ENCODE measurements at regions of chr14 and their contacts with region 1.

Region 1: DNA sequence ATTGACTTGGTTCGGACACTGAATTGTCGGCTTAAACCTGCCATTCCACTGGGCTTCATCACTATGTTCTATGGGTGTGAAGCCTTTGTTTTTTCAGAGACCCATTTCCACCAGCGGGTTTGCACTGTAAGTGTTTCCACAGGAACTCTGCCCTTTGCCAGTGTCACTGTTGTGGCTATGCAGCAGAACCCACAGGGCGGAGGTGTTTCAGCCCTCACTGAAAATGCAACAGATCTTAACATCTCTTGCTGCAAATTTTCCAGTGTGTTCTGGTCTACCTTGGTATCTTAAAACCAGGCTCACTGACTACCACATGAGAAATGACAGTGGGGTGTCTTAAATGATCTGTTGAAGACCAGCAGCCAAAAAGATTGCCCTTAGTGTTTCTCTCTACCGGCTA is 21.1 kb downstream of the PRKCH start:
- DNase-seq: peak; percentile 87 to 95 (median 88)
- H3K4me3 ChIP-seq: peak overlapping the region; percentile 25 to 42
- H3K4me3 Mint-ChIP-seq: peak overlapping the region; percentile 72 to 92 (median 82)
- H3K27ac ChIP-seq: peak overlapping the region; percentile 78
- H3K27ac Mint-ChIP-seq: peak overlapping the region; percentile 93 to 98 (median 98)
- H3K4me1 ChIP-seq: peaks cover 97% of the 10 kb centered on the region
- H3K4me1 Mint-ChIP-seq: peaks cover 82 to 95% (median 88%) of the 10 kb centered on the region in 4 donors
- H3K27me3 ChIP-seq: no peaks in the 10 kb centered on the region
- H3K27me3 Mint-ChIP-seq: no peaks in the 10 kb centered on the region

Region 2: DNA sequence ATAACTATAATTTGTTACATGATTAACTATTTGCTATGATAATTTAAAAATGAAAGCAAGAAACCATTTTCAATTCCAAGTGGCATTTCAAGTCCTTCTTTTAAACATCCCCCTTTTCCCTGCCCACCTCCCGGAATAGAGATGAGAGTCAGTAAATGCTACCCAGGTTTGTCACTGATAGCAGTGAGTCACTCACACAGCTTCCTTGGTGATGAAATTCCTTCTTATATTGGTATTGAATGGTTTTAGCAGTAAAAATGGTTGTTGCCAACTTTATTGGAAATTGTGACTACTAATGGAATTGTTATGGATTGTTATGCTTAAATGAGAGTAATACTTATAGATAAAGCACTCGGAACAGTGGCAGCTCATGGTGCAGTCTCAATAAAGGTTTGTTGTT is 1002.9 kb before region 1 on chr14:
- CTCF ChIA-PET with region 1: no interaction called
- POLR2A ChIA-PET with region 1: no interaction called
- intact Hi-C with region 1: no loop called
- DNase-seq: no peak
- H3K4me3 ChIP-seq: no peak overlapping the region
- H3K4me3 Mint-ChIP-seq: no peak overlapping the region
- H3K27ac ChIP-seq: no peak overlapping the region
- H3K27ac Mint-ChIP-seq: no peak overlapping the region
- H3K4me1 ChIP-seq: no peaks in the 10 kb centered on the region
- H3K4me1 Mint-ChIP-seq: no peaks in the 10 kb centered on the region
- H3K27me3 ChIP-seq: peaks cover 5% of the 10 kb centered on the region
- H3K27me3 Mint-ChIP-seq: peaks cover 26 to 27% of the 10 kb centered on the region in 2 donors

Region 3: DNA sequence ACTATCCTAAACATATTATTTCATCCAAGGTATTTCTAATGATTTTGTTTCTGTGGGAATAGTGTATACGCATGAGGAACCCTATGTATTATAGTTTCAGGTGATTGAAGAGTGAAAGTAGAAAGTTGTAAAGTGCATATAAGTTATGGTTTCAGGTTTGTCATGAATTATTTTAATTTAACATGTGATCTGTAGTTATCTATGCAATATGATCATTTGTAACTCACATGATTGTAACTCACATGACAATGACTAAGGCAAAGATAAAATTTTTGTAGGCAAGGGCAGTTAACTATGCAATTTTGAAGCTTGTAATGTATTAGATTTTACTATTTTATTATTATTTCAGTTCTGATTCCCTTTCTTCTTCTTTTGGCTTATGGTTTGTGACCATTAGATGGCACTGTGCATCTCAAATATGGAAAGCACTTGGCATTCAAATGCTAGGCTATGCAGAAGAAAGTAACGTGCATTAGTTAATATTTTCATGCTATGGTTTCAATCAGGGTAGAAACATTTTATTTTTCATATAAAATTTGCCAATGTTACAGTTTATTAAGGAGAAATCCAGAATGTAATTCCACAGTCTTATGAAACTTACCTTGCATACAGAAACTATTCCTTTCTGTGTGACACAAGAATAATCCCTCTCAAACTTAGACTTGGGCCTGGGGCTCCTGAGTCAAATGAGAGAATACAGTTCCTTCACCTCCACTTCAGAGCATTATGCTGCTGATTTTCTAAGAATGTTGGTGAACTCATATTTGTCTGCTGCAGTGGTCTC is 45.6 kb before region 1 on chr14:
- CTCF ChIA-PET with region 1: interaction called, 3 read pairs
- POLR2A ChIA-PET with region 1: no interaction called
- intact Hi-C with region 1: loop called (anchors 1 kb)
- DNase-seq: peak; percentile 41 to 67 (median 59)
- H3K4me3 ChIP-seq: no peak overlapping the region
- H3K4me3 Mint-ChIP-seq: no peak overlapping the region
- H3K27ac ChIP-seq: no peak overlapping the region
- H3K27ac Mint-ChIP-seq: peak overlapping the region in 2 of 7 donors; percentile 43 to 79
- H3K4me1 ChIP-seq: peaks cover 21% of the 10 kb centered on the region
- H3K4me1 Mint-ChIP-seq: peaks cover 27 to 47% (median 38%) of the 10 kb centered on the region in 4 donors
- H3K27me3 ChIP-seq: no peaks in the 10 kb centered on the region
- H3K27me3 Mint-ChIP-seq: no peaks in the 10 kb centered on the region

Region 4: GRCh38 chr14:61308198-61308597 is 34.3 kb before region 1 on chr14:
- CTCF ChIA-PET with region 1: no interaction called
- POLR2A ChIA-PET with region 1: no interaction called
- intact Hi-C with region 1: no loop called
- DNase-seq: no peak
- H3K4me3 ChIP-seq: no peak overlapping the region
- H3K4me3 Mint-ChIP-seq: no peak overlapping the region
- H3K27ac ChIP-seq: no peak overlapping the region
- H3K27ac Mint-ChIP-seq: peak overlapping the region in 1 of 7 donors; percentile 60
- H3K4me1 ChIP-seq: peaks cover 12% of the 10 kb centered on the region
- H3K4me1 Mint-ChIP-seq: peaks cover 7 to 13% (median 10%) of the 10 kb centered on the region in 4 donors
- H3K27me3 ChIP-seq: no peaks in the 10 kb centered on the region
- H3K27me3 Mint-ChIP-seq: no peaks in the 10 kb centered on the region

Region 5: GRCh38 chr14:61355892-61356325 is 13.4 kb after region 1 on chr14:
- CTCF ChIA-PET with region 1: interaction called, 6 read pairs
- POLR2A ChIA-PET with region 1: interaction called, 293 read pairs
- intact Hi-C with region 1: loop called (anchors 1 kb)
- DNase-seq: peak in 1 of 5 donors; percentile 84
- H3K4me3 ChIP-seq: peak overlapping the region in 1 of 2 donors; percentile 22
- H3K4me3 Mint-ChIP-seq: peak overlapping the region; percentile 37 to 81 (median 72)
- H3K27ac ChIP-seq: peak overlapping the region; percentile 2
- H3K27ac Mint-ChIP-seq: peak overlapping the region; percentile 82 to 95 (median 89)
- H3K4me1 ChIP-seq: peaks cover 100% of the 10 kb centered on the region
- H3K4me1 Mint-ChIP-seq: peaks cover 74 to 98% (median 89%) of the 10 kb centered on the region in 4 donors
- H3K27me3 ChIP-seq: no peaks in the 10 kb centered on the region
- H3K27me3 Mint-ChIP-seq: no peaks in the 10 kb centered on the region

Region 6: GRCh38 chr14:61388173-61388975 is 45.9 kb after region 1 on chr14:
- CTCF ChIA-PET with region 1: interaction called, 5 read pairs
- POLR2A ChIA-PET with region 1: interaction called, 133 read pairs
- intact Hi-C with region 1: loop called (anchors 1 kb)
- DNase-seq: peak; percentile 50 to 69 (median 61)
- H3K4me3 ChIP-seq: peak overlapping the region in 1 of 2 donors; percentile 26
- H3K4me3 Mint-ChIP-seq: peak overlapping the region in 2 of 8 donors; percentile 72 to 78
- H3K27ac ChIP-seq: peak overlapping the region; percentile 65
- H3K27ac Mint-ChIP-seq: no peak overlapping the region
- H3K4me1 ChIP-seq: peaks cover 100% of the 10 kb centered on the region
- H3K4me1 Mint-ChIP-seq: peaks cover 0 to 50% (median 20%) of the 10 kb centered on the region in 4 donors
- H3K27me3 ChIP-seq: no peaks in the 10 kb centered on the region
- H3K27me3 Mint-ChIP-seq: no peaks in the 10 kb centered on the region

Region 7: DNA sequence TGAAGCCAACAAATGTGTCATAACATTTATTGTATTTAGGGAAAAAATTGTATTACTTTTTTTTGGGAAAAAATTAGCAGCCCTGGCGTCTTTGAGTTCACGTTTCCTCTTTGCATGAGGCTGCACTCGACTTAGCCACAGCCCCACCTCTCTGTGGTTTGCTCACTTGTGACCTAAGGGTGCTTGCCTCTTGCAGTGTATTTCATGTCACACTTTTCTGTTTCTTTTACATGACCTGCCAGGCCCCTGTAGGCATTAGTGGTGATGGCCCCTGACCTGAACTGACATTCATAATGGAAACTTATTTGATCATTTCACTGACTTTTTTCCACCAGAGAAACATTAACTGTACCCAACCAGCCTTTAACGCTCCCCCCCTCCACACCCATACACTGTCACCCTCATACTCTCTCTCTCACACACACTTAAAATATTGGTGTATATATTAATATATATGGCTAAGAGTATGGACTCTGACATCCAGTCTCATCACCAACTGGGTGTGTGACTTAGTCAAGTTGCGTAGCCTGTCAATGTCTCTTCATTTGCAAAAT is 101.8 kb after region 1 on chr14:
- CTCF ChIA-PET with region 1: interaction called, 3 read pairs
- POLR2A ChIA-PET with region 1: interaction called, 38 read pairs
- intact Hi-C with region 1: loop called (anchors 2 kb)
- DNase-seq: peak; percentile 56 to 87 (median 63)
- H3K4me3 ChIP-seq: no peak overlapping the region
- H3K4me3 Mint-ChIP-seq: peak overlapping the region; percentile 58 to 87 (median 78)
- H3K27ac ChIP-seq: peak overlapping the region; percentile 44
- H3K27ac Mint-ChIP-seq: peak overlapping the region; percentile 89 to 97 (median 93)
- H3K4me1 ChIP-seq: peaks cover 98% of the 10 kb centered on the region
- H3K4me1 Mint-ChIP-seq: peaks cover 74 to 97% (median 87%) of the 10 kb centered on the region in 4 donors
- H3K27me3 ChIP-seq: no peaks in the 10 kb centered on the region
- H3K27me3 Mint-ChIP-seq: no peaks in the 10 kb centered on the region

Region 8: DNA sequence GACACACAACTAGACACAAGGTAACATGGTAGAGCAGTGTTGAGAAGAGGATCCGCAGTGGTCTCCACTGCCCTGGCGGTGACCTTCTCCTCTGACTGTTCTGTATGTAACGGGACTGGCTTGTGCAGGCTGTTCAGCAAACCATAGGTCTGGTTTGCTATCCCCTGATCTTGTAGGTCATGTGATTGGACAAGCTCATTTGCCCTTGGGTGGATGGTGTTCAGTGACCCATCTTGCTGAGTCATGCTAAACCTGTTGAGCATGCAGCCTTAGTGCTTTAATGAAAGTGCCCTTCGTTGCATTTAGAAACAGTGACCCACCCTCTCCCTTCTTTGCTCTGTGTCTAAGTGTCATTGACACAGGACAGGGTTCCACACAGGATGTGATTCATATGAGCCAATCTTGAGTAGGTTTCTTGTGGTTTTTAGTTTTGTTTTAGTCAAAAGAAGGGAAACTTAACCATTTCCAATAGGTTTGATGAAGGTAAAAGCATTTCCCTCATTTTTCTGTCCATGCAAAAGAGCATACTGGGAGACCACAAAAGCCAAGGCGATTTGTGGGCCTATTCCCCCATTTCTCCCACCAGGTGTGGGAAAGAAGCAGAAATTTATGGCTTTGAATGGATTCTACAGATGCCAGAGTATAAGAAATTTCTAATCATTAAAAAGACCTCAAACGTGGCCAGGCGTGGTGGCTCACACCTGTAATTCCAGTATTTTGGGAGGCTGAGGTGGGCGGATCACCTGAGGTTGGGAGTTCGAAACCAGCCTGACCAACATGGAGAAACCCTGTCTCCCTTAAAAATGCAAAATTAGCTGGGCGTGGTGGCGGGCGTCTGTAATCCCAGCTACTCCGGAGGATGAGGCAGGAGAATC is 320.2 kb after region 1 on chr14:
- CTCF ChIA-PET with region 1: no interaction called
- POLR2A ChIA-PET with region 1: interaction called, 3 read pairs
- intact Hi-C with region 1: loop called (anchors 1 kb)
- DNase-seq: peak; percentile 61 to 78 (median 69)
- H3K4me3 ChIP-seq: peak overlapping the region; percentile 26 to 37
- H3K4me3 Mint-ChIP-seq: peak overlapping the region; percentile 74 to 92 (median 82)
- H3K27ac ChIP-seq: peak overlapping the region; percentile 37
- H3K27ac Mint-ChIP-seq: peak overlapping the region; percentile 92 to 98 (median 95)
- H3K4me1 ChIP-seq: peaks cover 57% of the 10 kb centered on the region
- H3K4me1 Mint-ChIP-seq: peaks cover 47 to 56% (median 54%) of the 10 kb centered on the region in 4 donors
- H3K27me3 ChIP-seq: no peaks in the 10 kb centered on the region
- H3K27me3 Mint-ChIP-seq: no peaks in the 10 kb centered on the region

Region 9: GRCh38 chr14:61925043-61925442 is 582.6 kb after region 1 on chr14:
- CTCF ChIA-PET with region 1: no interaction called
- POLR2A ChIA-PET with region 1: no interaction called
- intact Hi-C with region 1: no loop called
- DNase-seq: no peak
- H3K4me3 ChIP-seq: no peak overlapping the region
- H3K4me3 Mint-ChIP-seq: no peak overlapping the region
- H3K27ac ChIP-seq: no peak overlapping the region
- H3K27ac Mint-ChIP-seq: no peak overlapping the region
- H3K4me1 ChIP-seq: no peaks in the 10 kb centered on the region
- H3K4me1 Mint-ChIP-seq: peaks cover 0 to 1% (median 0%) of the 10 kb centered on the region in 4 donors
- H3K27me3 ChIP-seq: no peaks in the 10 kb centered on the region
- H3K27me3 Mint-ChIP-seq: peaks cover 8 to 18% of the 10 kb centered on the region in 2 donors

Measured in CD4-positive, alpha-beta memory T cell (primary cell).